A549 (cell line): ENCODE measurements at regions of chr10 and their contacts with region 1.

Region 1: GRCh38 chr10:91551856-91552255 is 81.0 kb downstream of the PPP1R3C start:
- DNase-seq: peak; percentile 35 to 76
- ATAC-seq: peak; percentile 79 to 96
- H3K4me3 ChIP-seq: no peak overlapping the region
- H3K27ac ChIP-seq: peak overlapping the region in 1 of 2 experiments; percentile 39; a peak in 1 of 6 replicates
- H3K4me1 ChIP-seq: peaks cover 10% of the 10 kb centered on the region
- CTCF ChIP-seq: peak; percentile 68
- EP300 ChIP-seq: no peak
- POLR2A ChIP-seq: no peak
- RAD21 ChIP-seq: peak; percentile 80 to 83

Region 2: GRCh38 chr10:91493313-91493712 is 58.5 kb before region 1 on chr10:
- CTCF ChIA-PET with region 1: interaction called, 17 read pairs
- POLR2A ChIA-PET with region 1: no interaction called
- DNase-seq: peak; percentile 15 to 61
- ATAC-seq: peak in 1 of 2 experiments; percentile 55; a peak in 1 of 6 replicates
- H3K4me3 ChIP-seq: no peak overlapping the region
- H3K27ac ChIP-seq: no peak overlapping the region
- H3K4me1 ChIP-seq: peaks cover 6% of the 10 kb centered on the region; the same call in 2 of the 3 replicates
- CTCF ChIP-seq: peak; percentile 64
- EP300 ChIP-seq: no peak
- POLR2A ChIP-seq: no peak
- RAD21 ChIP-seq: peak; percentile 67 to 88

Region 3: DNA sequence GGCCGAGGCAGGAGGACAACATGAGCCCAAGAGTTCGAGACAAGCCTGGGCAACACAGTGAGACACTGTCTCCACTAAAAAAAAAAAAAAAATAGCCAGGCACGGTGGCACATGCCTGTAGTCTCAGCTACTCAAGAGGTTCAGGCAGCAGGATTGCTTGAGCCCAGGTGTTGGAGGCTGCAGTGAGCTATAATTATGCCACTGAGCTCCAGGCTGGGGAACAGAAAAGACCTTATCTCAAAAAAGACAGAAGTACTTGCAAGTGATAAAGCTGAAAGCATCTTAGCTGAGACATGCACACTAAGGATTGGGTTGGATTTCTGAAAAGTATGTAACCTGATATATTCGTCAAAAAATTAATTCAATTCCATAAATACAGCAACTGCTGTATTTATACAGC is 12.7 kb after region 1 on chr10:
- CTCF ChIA-PET with region 1: interaction called, 22 read pairs
- POLR2A ChIA-PET with region 1: no interaction called
- DNase-seq: no peak
- ATAC-seq: no peak
- H3K4me3 ChIP-seq: no peak overlapping the region
- H3K27ac ChIP-seq: no peak overlapping the region
- H3K4me1 ChIP-seq: 0 out of 3 replicates have a peak, but pooled peaks cover 3% of the 10 kb centered on the region
- CTCF ChIP-seq: no peak
- EP300 ChIP-seq: no peak
- POLR2A ChIP-seq: no peak
- RAD21 ChIP-seq: no peak

Region 4: GRCh38 chr10:91597197-91597881 is 45.5 kb after region 1 on chr10:
- CTCF ChIA-PET with region 1: interaction called, 13 read pairs
- POLR2A ChIA-PET with region 1: no interaction called
- DNase-seq: peak in 1 of 2 experiments; percentile 77
- ATAC-seq: peak; percentile 65 to 75
- H3K4me3 ChIP-seq: no peak overlapping the region
- H3K27ac ChIP-seq: peak overlapping the region; percentile 93 to 94
- H3K4me1 ChIP-seq: peaks cover 59% of the 10 kb centered on the region
- CTCF ChIP-seq: no peak
- EP300 ChIP-seq: no peak; a peak in 1 of 5 replicates
- POLR2A ChIP-seq: no peak
- RAD21 ChIP-seq: 0 out of 5 replicates have a peak, but pooled peaks of 1 of the 2 experiments have one; percentile 7

Region 5: GRCh38 chr10:91627344-91628102 is 75.7 kb after region 1 on chr10:
- CTCF ChIA-PET with region 1: interaction called, 38 read pairs
- POLR2A ChIA-PET with region 1: no interaction called
- DNase-seq: no peak
- ATAC-seq: peak; percentile 39 to 61; a peak in 4 of 6 replicates
- H3K4me3 ChIP-seq: no peak overlapping the region
- H3K27ac ChIP-seq: no peak overlapping the region
- H3K4me1 ChIP-seq: peaks cover 23% of the 10 kb centered on the region; the same call in 2 of the 3 replicates
- CTCF ChIP-seq: no peak
- EP300 ChIP-seq: no peak
- POLR2A ChIP-seq: no peak
- RAD21 ChIP-seq: peak in 1 of 2 experiments; percentile 39; a peak in 3 of 5 replicates